ENCODE measurements at regions of chr11 and their contacts with region 1.

Region 1: DNA sequence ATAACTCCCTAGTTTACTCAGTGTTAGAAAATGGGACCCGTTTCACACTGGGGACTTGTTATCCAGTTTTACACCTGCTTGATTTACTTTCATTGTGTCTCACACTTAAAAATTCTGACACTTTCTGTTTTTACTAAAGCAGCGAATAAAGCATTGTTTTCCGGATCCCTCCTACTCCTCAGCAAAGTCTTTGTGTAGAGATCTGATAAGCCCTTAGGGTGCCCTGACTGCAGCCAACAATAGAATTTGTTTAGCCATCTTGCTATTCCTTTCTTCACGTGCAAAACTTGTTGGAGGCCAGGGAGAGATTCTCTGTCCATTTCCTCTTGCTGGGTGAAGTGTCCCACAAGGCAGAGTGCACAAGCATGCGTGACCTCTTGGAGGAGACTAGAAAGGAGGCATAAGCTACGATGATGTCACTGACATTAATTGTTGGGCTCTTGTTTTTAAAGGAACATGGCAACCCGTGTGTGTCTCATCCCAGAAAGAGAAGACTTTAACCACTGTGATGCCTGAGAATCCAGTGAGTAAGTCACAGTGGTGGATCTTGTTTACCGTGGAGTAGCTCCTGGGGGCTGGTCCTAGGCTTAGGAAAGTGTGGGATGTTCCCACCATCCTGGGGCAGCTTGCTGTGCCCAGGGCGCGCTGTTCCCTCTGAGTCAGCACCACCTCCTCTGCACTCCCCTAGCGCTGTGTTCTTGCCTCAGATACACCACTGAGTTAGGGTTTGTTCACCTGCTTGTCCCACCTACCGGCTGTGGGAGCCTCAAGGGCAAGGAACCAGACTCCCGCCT is 27.7 kb downstream of the MICAL2 start:
- DNase-seq: no peak
- H3K4me3 Mint-ChIP-seq: no peak overlapping the region
- H3K27ac Mint-ChIP-seq: peak overlapping the region; percentile 32
- H3K4me1 Mint-ChIP-seq: peaks cover 54% of the 10 kb centered on the region
- H3K27me3 Mint-ChIP-seq: no peaks in the 10 kb centered on the region

Region 2: GRCh38 chr11:11876458-11876857 is 261.7 kb before region 1 on chr11:
- CTCF ChIA-PET with region 1: no interaction called
- intact Hi-C with region 1: no loop called
- DNase-seq: peak; percentile 17
- H3K4me3 Mint-ChIP-seq: no peak overlapping the region
- H3K27ac Mint-ChIP-seq: no peak overlapping the region
- H3K4me1 Mint-ChIP-seq: peaks cover 46% of the 10 kb centered on the region
- H3K27me3 Mint-ChIP-seq: no peaks in the 10 kb centered on the region

Region 3: DNA sequence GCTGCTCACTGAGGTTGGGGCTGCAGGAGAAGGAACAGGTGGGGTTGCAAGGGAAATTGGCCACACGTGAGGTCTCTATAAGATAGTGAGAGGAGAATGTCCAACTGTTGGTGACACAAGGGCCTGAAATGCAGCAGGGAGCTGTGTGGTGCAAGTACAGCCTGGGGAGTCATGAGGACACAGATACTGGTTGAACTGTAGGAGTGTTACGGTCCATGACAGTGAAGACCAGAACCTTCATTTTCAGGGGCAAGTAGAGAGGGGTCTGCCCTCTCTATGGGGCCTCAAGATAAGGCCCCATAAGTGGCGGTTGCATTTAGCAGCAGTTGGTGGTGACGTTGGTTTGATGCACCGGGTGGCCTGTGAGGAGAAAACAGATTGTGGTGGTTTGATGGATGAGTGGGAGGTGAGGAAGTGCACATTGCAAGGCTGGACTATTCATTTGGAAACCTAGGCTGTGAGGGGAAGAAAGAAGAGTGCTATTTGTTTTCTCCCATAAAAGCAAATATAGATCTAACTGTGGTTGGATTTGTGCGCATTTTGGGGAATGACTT is 11.6 kb after region 1 on chr11:
- CTCF ChIA-PET with region 1: interaction called, 3 read pairs
- intact Hi-C with region 1: loop called (anchors 1 kb)
- DNase-seq: peak; percentile 80
- H3K4me3 Mint-ChIP-seq: peak overlapping the region; percentile 3
- H3K27ac Mint-ChIP-seq: peak overlapping the region; percentile 87
- H3K4me1 Mint-ChIP-seq: peaks cover 48% of the 10 kb centered on the region
- H3K27me3 Mint-ChIP-seq: no peaks in the 10 kb centered on the region

Measured in activated naive CD4-positive, alpha-beta T cell treated with anti-CD3 and anti-CD28 coated beads for 36 hours (primary cell).